Dendritic cell treated with granulocyte-macrophage colony-stimulating factor and Interleukin-4, amounts not matched to agents 40 ng/mL and 50 ng/mL, for 4 days (primary cell): ENCODE measurements at regions of chr20 and their contacts with region 1.

Region 1: DNA sequence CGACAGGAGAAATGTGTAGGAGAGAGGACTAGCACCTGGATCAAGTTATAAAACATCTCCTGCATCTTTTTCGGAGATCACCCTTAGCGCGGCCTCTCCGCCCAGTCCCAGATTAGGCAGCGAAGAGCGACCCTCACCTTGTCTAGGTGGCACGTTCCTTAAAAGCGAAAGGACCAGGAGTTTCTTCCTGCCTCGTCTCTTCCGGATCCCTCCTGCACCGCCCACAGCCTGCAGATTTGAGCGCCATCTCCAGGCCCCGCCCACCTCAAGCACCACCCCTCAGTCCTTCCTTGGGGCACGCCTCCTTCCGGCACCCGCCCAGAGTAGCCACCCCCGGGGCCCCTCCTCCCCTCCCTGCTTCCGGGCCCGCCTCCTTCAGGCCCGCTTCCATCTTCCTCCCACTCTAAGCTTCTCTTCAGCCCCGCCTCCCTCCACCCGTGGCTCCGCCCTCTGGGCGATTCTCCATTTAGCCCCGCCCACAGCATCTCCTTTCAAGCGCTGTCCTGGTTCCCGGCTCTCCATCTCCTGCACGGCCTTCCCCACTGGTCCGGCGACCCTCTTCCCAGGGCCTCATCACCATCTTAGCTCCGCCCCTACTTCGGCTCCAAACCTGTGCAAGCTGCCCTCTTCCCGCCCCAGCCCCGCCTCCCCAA is 662 bp upstream of the RALY start:
- H3K4me3 Mint-ChIP-seq: peak overlapping the region; percentile 94
- H3K27ac Mint-ChIP-seq: peak overlapping the region; percentile 95
- H3K4me1 Mint-ChIP-seq: peaks cover 52% of the 10 kb centered on the region
- H3K27me3 Mint-ChIP-seq: no peaks in the 10 kb centered on the region

Region 2: DNA sequence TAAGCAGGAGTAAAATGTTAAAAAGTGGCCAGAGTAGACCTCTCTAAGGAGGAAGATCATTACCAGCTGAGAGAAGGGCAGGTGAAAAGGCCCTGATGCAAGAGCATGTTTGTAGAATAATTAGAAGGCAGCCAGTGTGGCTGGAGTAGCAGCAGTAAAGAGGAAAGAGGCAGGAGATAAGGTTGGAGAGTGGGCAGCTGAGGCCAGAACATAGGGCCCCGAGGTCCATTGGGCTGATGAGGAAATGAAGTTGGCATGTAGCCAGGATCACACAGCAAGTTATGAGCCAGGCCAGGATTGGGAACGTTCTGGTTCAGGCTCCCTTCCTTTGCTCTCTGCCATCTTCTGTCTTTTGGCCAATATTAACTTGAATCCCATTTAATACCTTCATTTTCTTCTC is 52.2 kb after region 1 on chr20:
- intact Hi-C with region 1: no loop called
- H3K4me3 Mint-ChIP-seq: no peak overlapping the region
- H3K27ac Mint-ChIP-seq: no peak overlapping the region
- H3K4me1 Mint-ChIP-seq: peaks cover 72% of the 10 kb centered on the region
- H3K27me3 Mint-ChIP-seq: no peaks in the 10 kb centered on the region

Region 3: DNA sequence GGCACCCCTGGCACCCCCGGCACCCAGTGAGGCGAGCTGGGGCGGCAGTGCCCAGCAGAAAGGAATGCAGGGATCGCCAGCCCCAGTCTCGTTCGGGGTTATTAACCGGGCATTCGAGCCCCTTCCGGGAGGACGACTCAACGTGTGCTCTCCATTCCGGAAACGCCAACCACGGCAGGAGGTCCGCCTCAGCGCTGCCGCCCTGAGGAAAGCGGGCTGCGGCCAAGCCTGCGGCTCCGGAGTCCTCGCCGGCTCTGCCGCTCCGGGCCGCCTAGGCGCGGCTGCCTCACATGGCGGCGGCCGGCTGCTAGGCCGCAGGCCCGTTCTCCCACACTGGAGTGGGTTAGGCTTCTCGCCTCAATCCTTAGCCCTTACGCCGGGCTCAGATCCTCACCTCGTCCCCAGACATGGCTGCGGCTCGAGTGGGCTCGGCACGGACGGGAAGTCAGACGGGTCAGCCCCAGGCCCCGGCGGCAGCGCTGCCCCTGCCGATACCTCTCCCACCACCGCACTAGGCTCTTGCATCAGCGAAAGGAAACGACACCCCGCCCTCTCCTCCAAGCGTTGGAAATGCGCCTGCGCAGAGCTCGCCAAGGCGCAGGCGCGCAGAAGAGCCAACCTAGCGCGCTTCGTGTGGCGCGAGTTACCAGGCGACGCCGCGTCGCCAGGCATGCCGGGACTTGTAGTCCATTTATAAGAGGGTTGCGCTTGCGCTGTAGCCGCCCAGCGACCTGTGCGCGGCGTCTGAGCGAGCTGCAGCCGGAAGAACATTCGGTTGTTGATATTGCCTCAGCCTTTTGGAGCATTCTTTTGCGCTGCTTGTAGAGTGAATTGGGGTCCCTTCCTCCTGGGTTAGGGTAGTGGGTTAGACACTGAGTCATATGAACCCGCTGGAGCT is 118.9 kb after region 1 on chr20 and contains the start of gene EIF2S2:
- intact Hi-C with region 1: loop called (anchors 5 kb)
- H3K4me3 Mint-ChIP-seq: peak within 1 kb of the TSS; percentile 96
- H3K27ac Mint-ChIP-seq: peak within 1 kb of the TSS; percentile 91
- H3K4me1 Mint-ChIP-seq: peaks cover 40% of the 10 kb centered on the region
- H3K27me3 Mint-ChIP-seq: no peaks in the 10 kb centered on the region